Posterior vena cava (tissue), 2 donors: ENCODE measurements at regions of chr20 and their contacts with region 1.

Region 1: DNA sequence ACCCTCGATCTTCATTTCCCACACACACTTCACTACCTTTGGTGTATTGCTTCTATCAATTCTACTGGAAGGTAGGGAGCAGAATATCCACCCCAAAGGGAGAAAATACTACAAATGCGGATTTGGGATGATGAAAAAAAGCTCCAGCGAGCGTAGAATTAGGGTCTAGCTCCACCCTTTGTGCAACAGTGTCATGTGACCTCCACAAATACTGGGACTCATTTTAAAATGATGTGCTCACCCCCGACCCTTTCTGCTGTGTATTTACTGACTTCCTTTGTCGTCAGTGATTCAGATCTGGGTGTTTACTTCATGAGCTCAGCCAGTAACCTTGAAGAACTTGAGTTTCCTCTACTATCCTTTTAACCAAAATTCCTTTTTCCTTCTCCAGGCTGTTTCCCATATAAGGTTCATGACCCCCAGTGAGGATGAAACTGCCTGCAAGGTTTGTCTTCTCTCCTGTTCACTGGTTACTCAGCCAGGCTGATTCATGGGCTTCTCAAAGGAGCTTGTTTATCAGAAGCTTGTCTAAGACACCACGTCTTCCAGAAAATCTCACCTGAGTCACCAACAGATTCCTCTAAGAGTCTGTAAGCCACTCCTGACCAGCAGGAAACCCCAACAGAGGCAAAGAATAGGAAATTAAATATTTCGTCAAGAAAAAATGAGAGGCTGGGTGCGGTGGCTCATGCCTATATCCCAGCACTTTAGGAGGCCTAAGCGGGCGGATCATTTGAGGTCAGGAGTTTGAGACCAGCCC is 39.6 kb upstream of the PAX1 start:
- DNase-seq: no peak

Region 2: GRCh38 chr20:22438932-22439331 is 773.1 kb after region 1 on chr20:
- intact Hi-C with region 1: no loop called
- DNase-seq: no peak

Region 3: DNA sequence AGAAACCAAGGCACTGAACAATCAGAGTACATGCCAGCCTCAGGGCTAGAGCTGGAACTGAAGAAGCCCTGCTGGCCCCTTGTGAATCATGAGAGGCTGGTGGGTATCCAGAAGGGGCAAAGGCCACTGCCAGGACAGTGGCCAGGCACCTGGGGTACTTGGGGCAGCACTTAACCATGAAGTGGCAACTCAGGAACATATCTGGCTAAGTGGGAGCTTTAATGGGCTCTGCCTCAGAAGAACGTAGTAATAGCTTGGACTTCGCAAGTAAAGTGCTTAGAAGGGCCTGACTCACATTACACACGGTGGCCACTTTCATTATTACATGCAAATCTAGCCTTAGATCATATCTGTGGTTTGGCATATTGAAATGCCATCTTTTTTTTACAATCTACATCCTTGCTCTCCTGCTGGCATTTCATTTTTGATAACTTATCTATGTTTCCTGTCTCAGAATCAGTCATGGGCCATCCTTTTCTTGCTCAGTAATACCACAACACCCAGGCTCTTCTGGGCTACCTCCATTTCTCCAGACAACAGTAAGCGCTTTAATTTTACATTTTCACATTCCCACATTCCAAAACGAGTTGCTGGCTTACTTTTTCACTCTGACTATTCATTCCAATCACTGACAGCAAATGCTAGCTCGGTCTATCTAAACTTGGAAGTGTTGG is 1733.8 kb after region 1 on chr20:
- intact Hi-C with region 1: loop called in 1 of 2 experiments (anchors 10 kb)
- DNase-seq: no peak